Stomach (tissue), 19 donors: ENCODE measurements at regions of chr9 and their contacts with region 1.

Region 1: GRCh38 chr9:112061152-112061740 is 113.9 kb downstream of the SUSD1 start:
- DNase-seq: peak; percentile 55 to 90
- H3K4me3 ChIP-seq: no peak overlapping the region
- H3K27ac ChIP-seq: peak overlapping the region; percentile 73 to 90 (median 80)
- H3K4me1 ChIP-seq: peaks cover 19 to 61% (median 34%) of the 10 kb centered on the region in 4 donors
- H3K27me3 ChIP-seq: no peaks in the 10 kb centered on the region
- CTCF ChIP-seq: no peak
- EP300 ChIP-seq: no peak
- POLR2A ChIP-seq: no peak

Region 2: DNA sequence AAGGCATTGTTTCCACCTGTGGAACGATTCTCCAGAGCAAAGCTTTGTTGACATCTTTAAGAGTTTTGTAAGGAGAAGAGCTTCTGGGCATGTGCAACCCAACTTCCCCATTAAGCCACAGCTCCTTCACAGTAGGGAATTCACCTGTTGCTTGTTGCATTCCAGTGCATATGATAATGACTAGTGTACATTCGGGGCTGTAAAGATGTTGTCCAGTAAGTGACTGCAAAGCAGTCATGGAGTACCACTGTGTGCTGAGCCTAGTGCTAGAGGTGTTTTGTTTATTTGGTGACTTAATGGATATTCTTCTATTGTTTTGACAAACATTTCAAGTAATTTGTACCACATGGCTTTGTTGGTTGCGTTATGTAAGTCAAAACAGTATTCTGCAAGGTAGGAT is 151.8 kb before region 1 on chr9:
- intact Hi-C with region 1: loop called (anchors 10 kb)
- DNase-seq: no peak
- H3K4me3 ChIP-seq: no peak overlapping the region
- H3K27ac ChIP-seq: peak overlapping the region in 1 of 5 donors; percentile 6
- H3K4me1 ChIP-seq: peaks cover 19 to 97% (median 68%) of the 10 kb centered on the region in 4 donors
- H3K27me3 ChIP-seq: no peaks in the 10 kb centered on the region
- CTCF ChIP-seq: no peak
- EP300 ChIP-seq: no peak
- POLR2A ChIP-seq: no peak

Region 3: DNA sequence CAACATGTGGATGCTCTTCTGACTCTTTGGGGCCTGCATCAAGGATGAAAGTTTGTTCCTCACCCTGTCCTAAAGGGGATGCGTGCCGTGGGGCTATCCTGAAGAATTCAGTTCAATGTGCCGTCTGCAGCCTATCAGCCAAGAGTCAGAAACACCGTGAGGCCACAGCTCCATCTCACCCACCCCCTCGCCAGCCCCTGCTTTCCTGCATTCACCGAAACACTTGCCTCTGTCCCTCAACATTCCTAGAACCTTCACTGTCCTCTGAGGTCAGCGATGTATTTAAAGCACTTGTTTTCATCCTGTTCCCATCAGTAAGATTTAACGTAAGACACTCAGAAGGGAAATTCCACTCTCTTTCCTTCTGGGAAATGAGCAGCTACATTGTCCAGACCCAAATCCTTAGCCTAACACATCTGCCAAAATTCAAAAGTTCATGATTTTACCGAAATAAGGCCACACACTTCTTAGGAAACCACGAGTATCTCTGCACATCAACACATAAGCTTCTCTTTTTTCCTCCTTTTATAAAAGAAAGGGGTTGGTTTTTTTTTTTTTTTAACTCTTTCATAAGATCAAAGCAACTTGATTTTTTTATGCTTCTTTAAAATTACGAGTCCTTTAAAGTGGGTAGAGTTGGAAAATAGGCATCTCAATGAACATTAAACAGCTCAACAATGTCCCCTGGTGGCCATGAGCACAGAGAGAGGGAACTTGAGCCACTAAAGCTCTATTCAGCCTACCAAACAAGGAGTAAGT is 13.2 kb after region 1 on chr9:
- intact Hi-C with region 1: no loop called
- DNase-seq: peak; percentile 72 to 92
- H3K4me3 ChIP-seq: no peak overlapping the region
- H3K27ac ChIP-seq: peak overlapping the region in 4 of 5 donors; percentile 67 to 84 (median 81)
- H3K4me1 ChIP-seq: peaks cover 6 to 71% (median 29%) of the 10 kb centered on the region in 4 donors
- H3K27me3 ChIP-seq: no peaks in the 10 kb centered on the region
- CTCF ChIP-seq: peak in 5 of 7 experiments; percentile 74 to 97 (median 87)
- EP300 ChIP-seq: peak; percentile 82
- POLR2A ChIP-seq: no peak